BJ (cell line): ENCODE measurements at regions of chr1 and their contacts with region 1.

Region 1: DNA sequence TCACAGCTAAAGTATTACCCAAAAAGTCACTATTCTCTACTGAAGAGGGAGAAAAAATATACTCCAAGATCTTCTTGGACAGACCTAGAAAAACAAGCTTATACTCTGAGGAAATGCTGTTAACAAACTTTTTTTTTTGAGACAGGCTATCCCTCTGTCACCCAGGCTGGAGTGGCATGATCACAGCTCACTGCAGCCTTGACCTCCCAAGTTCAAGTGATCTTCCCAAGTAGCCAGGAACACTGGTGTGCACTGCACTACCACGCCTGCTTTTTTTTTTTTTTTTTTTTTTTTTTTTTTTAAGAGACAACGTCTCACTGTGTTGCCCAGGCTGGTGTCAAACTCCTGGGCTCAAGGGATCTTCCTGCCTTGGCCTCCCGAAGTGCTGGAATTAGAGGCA is 17.3 kb downstream of the GLRX2 start:
- DNase-seq: no peak
- H3K4me3 ChIP-seq: no peak overlapping the region
- H3K27me3 ChIP-seq: no peaks in the 10 kb centered on the region
- CTCF ChIP-seq: no peak

Region 2: DNA sequence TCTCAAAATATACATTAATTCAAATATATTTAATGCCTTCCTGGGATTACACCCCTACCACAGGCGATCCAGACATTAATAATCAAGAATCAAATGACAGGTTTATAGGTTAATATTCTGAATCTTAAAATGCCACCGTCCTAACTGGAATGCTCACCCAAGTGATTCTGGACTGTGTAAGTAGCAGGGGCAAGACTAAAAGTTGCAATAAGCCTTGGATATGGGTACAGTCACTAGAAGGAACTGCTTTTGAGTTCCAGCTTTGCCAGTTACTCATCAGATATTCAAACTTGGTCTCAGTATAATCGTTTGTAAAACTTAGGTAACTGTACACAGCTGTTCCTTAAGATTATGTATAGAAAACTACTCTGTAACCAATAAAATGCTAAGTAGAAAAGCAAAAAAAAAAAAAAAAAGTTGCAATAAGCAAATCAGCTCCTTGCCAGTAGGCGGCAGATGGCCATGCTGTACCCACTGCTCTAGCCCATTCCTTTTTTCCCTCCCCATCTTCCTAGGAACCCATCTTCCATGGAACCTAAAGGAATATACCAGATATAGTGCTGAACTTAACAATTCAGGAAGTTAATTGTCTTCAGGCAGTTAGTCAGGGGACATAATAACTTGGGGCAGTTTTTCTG is 18.0 kb before region 1 on chr1:
- CTCF ChIA-PET with region 1: no interaction called
- POLR2A ChIA-PET with region 1: no interaction called
- DNase-seq: no peak
- H3K4me3 ChIP-seq: no peak overlapping the region
- H3K27me3 ChIP-seq: no peaks in the 10 kb centered on the region
- CTCF ChIP-seq: peak; percentile 25; the same call in 1 of the 2 replicates

Region 3: GRCh38 chr1:193201021-193201420 is 113.1 kb after region 1 on chr1:
- CTCF ChIA-PET with region 1: no interaction called
- POLR2A ChIA-PET with region 1: interaction called, 18 read pairs
- DNase-seq: no peak
- H3K4me3 ChIP-seq: no peak overlapping the region
- H3K27me3 ChIP-seq: no peaks in the 10 kb centered on the region
- CTCF ChIP-seq: no peak